ENCODE measurements at regions of chr2 and their contacts with region 1.

Region 1: DNA sequence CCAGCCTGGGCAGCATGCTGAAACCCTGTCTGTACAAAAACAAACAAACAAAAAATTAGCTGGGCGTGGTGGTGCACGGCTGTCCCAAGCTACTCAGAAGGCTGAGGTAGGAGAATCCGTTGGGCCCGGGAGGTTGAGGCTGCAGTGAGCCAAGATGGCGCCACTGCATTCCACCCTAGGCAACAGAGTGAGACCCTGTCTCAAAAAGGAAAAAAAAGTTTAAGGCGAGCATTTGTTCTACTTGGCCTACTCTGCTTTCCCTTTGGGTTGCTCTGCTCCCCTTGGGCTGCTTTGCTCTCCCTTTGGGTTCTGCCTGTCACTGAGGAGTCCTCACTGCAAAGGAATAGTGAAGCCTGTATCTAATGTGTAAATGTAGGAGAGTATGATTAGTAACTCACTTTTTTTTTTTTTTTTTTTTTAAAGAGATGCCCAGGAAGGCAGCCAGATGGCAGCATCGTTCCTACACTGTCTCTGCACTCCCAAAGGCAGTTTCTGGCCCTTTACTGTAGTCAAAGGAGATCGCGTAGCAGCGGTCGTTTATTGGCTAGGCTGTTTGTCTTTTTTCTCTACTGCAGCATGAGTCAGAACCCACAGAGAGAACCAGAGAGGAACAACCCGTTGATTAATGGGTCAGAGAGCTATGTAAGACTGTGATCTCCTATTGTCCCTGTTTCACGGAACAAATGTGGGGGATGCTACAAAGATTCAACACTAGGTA is 118.3 kb upstream of the CWC22 start:
- DNase-seq: peak; percentile 97
- H3K4me3 ChIP-seq: peak overlapping the region; percentile 31
- H3K27ac ChIP-seq: no peak overlapping the region
- H3K4me1 ChIP-seq: peaks cover 13% of the 10 kb centered on the region
- H3K27me3 ChIP-seq: no peaks in the 10 kb centered on the region

Region 2: DNA sequence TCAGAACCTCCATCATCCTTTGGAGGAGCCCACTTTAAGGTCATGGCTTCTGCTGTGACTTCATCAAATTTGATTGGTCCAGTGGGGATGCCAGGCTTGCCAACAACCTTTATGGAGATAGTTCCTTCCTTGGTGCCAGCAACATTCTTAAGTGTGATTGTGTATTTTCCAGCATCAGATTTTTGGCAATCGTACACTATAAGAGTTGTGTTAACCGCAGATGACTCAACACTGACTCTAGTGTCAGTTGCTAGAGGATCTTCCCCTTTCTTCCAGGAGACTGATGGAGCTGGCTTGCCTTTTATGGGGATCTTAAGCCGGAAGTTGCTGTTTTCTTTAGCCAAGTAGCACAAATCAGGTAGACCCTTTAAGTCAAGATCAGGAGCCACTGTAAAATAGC is 1546.4 kb before region 1 on chr2:
- in situ Hi-C with region 1: no loop called
- DNase-seq: peak; percentile 30
- H3K4me3 ChIP-seq: no peak overlapping the region
- H3K27ac ChIP-seq: no peak overlapping the region
- H3K4me1 ChIP-seq: peaks cover 5% of the 10 kb centered on the region
- H3K27me3 ChIP-seq: no peaks in the 10 kb centered on the region

Region 3: DNA sequence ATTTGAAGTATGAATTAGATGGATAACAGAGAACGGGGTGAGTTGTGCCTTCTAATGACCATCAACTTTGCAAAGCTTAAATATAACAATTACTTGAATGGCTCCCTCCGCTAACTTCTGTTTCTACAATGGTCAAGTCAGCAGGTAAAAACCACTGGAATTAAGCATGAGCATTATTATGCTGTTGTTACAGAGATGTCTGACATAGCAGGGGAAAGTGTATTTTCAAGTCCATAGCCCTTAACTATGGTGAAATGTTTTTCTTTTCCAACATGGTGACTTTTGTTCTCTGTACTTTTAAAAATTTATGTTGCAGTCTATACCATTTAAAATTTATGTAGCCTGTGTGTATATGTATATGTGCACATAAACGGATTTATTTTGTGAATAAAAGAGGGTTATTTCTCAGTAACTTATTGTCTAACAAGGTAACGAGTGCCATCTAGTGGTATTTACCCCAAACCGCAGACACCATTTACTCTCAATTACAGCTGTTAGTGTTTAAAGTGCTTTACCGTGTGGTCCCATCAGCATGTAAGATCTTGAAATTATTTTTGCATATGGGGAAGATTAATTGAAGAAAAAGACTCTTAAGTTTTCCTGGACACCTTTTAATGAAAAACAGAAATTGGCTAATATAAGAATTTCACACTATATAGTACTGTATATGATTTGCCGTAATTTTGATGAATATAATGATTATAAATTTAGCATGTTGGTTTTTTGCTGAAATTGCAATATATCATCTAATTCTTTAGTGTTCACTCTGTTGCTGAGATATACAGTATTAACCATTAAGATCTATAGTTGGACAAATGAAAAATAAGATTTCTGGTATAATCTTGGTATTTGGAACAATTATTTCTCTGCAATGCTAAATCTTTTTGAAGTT is 933.2 kb after region 1 on chr2:
- in situ Hi-C with region 1: loop called (anchors 10 kb)
- DNase-seq: peak; percentile 37
- H3K4me3 ChIP-seq: no peak overlapping the region
- H3K27ac ChIP-seq: no peak overlapping the region
- H3K4me1 ChIP-seq: no peaks in the 10 kb centered on the region
- H3K27me3 ChIP-seq: no peaks in the 10 kb centered on the region

Region 4: GRCh38 chr2:181457121-181457740 is 1331.8 kb after region 1 on chr2 and contains the start of gene ITGA4:
- in situ Hi-C with region 1: loop called (anchors 10 kb)
- DNase-seq: peak; percentile 91
- H3K4me3 ChIP-seq: peak within 1 kb of the TSS; percentile 91
- H3K27ac ChIP-seq: peak within 1 kb of the TSS; percentile 26
- H3K4me1 ChIP-seq: peaks cover 22% of the 10 kb centered on the region
- H3K27me3 ChIP-seq: no peaks in the 10 kb centered on the region
- total RNA-seq, gene ITGA4: 33.3 and 40.0 TPM in 2 replicates